ENCODE measurements at regions of chr11 and their contacts with region 1.

Region 1: GRCh38 chr11:134253188-134253993 is at the starts of genes ACAD8 and THYN1:
- DNase-seq: peak; percentile 97
- ATAC-seq: peak; percentile 100
- total RNA-seq, gene ACAD8: 36.1 TPM
- total RNA-seq, gene THYN1: 36.8 TPM

Region 2: GRCh38 chr11:134024420-134025081 is 228.8 kb before region 1 on chr11:
- intact Hi-C with region 1: no loop called
- DNase-seq: no peak
- ATAC-seq: no peak

Region 3: DNA sequence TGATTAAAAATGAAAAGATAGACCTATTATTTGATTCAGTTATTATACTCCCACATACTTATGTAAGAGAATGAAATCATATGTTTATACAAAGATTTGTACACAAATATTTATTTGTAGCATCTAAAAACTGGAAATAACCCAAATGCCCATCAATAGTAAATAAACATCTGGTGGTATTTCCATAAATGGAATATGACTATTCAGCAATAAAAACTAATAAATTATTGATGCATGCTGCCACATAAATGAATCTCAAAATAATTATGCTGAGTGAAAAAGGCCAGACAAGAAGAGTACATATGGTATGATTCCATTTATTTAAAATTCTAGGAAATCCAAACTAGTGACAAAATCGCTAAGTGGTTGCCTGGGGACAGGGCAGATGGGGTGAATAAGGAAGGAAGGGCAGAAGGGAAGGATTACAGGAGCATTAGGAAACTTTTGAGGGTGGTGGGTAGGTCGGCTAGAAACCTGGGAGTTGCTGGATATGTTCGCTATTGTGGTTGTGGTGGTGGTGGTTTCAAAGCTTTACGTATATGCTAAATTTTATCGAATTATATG is 143.1 kb before region 1 on chr11:
- intact Hi-C with region 1: no loop called
- DNase-seq: no peak
- ATAC-seq: no peak

Region 4: DNA sequence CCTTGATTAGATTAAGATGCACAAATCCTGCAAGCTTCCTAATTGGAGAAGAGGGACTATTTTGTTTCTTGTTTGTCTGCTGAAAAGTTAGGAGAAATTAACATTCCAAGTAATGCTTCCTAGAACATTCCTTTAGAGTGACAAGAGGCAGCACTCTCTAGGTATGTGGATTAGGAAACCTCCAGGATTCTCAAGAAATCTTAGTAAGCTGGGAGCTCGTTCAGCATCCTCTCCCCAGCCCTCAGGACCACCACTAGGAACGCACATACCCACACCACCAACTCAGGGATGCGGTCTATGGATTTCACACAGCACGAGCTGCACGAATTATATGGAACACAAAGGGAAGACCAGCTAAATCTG is 82.5 kb before region 1 on chr11:
- intact Hi-C with region 1: no loop called
- DNase-seq: no peak
- ATAC-seq: no peak

Region 5: DNA sequence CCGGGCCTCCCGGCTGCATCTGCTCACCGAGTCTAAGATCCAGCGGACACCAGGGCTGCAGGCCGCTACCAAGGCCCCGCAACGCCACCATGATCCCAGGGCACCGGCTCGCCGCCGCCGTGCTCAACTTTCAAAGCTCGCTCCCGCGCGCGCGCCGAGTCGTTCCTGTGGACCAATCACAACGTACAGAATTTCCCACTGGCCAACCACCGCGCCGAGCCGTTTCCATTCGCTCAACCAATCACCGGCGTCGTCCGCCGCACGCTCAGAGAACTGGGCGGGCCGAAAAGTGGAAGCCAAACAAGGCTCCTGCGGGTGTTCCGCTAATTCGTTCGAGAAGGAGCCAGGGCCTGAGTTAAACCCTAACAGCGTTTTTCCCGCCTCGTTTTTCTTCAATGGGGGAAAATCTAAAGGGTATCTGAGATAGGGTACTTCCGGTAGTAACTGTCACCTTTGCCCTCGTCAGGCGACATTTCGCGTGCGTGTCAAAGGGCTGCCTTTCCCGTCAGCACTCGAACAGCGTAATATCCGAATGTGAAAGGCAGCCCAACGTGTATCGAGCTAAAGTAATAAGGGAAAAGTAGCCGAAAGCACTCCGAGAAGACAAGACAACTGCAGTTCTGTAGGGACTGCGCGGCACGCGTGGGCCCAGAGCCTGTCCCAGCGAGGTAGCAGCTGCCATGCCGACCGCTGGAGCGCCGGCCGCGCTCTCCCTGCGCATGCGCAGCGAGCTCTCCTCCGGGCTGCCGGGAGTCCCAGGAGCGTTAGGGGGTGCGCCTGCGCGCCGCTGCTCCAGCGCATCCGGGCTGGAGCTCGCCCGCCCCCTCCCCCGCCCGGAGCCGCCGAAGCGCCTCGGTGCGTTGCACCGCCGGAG is 29.3 kb before region 1 on chr11 and contains the starts of genes NCAPD3 and VPS26B:
- intact Hi-C with region 1: loop called (anchors 1 kb)
- DNase-seq: peak; percentile 99
- ATAC-seq: peak; percentile 95
- total RNA-seq, gene NCAPD3: 12.3 TPM
- total RNA-seq, gene VPS26B: 39.5 TPM

Region 6: DNA sequence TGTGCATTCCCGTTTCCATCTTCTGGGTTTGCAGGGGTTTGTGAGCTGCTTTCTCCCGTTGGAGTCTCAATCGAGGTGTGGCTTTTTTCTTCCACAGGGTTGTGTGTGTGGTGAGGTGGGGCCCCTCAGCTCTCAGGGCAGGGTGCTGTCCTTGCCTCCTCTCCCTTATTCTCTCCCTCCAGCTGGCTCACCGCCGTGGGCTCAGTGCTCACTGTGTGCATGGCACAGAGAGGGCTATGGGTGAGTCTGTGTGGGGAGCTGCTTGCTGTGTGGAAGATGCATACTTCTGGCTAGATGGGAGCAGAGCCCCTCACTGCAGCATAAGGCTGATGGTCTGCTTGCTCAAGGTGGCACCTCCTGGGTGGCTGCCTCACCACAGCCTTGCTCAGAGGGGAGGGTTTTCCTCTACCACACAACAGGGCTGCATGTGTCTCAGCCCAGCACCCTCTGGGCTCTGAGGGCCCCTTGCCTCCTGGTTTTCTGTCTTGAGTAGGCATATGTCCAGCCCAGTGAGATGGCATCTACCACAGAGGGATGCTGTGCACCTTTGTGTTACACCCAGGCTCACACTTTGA is 361.7 kb after region 1 on chr11:
- intact Hi-C with region 1: no loop called
- DNase-seq: no peak
- ATAC-seq: no peak